Heart left ventricle (tissue), 16 donors: ENCODE measurements at regions of chr1 and their contacts with region 1.

Region 1: GRCh38 chr1:240732390-240732789 is 120.4 kb upstream of the GREM2 start:
- DNase-seq: no peak
- ATAC-seq: no peak
- H3K4me3 ChIP-seq: no peak overlapping the region
- H3K27ac ChIP-seq: no peak overlapping the region
- H3K4me1 ChIP-seq: no peaks in the 10 kb centered on the region
- H3K27me3 ChIP-seq: peaks cover 0 to 6% (median 0%) of the 10 kb centered on the region in 9 donors
- CTCF ChIP-seq: peak in 11 of 12 donors; percentile 23 to 62 (median 49)
- POLR2A ChIP-seq: no peak

Region 2: GRCh38 chr1:240575981-240576662 is 156.3 kb before region 1 on chr1:
- intact Hi-C with region 1: no loop called
- DNase-seq: no peak
- ATAC-seq: peak in 1 of 4 donors; percentile 28
- H3K4me3 ChIP-seq: peak overlapping the region in 10 of 12 donors; percentile 3 to 48 (median 30)
- H3K27ac ChIP-seq: peak overlapping the region in 1 of 12 donors; percentile 7
- H3K4me1 ChIP-seq: no peaks in the 10 kb centered on the region
- H3K27me3 ChIP-seq: no peaks in the 10 kb centered on the region
- CTCF ChIP-seq: no peak
- POLR2A ChIP-seq: no peak

Region 3: GRCh38 chr1:240946926-240947325 is 214.5 kb after region 1 on chr1:
- intact Hi-C with region 1: loop called in 2 of 10 experiments (anchors 5 to 10 kb)
- DNase-seq: no peak
- ATAC-seq: no peak
- H3K4me3 ChIP-seq: no peak overlapping the region
- H3K27ac ChIP-seq: no peak overlapping the region
- H3K4me1 ChIP-seq: no peaks in the 10 kb centered on the region
- H3K27me3 ChIP-seq: no peaks in the 10 kb centered on the region
- CTCF ChIP-seq: peak in 6 of 12 donors; percentile 4 to 40 (median 31)
- POLR2A ChIP-seq: no peak